Activated B cell treated with CpG ODN at 0.5 μM for 24 hours (primary cell): ENCODE measurements at regions of chr2 and their contacts with region 1.

Region 1: GRCh38 chr2:437762-438393 is 150.0 kb upstream of the ALKAL2 start:
- DNase-seq: no peak
- ATAC-seq: peak; percentile 95
- H3K4me3 Mint-ChIP-seq: peak overlapping the region; percentile 81
- H3K27ac Mint-ChIP-seq: peak overlapping the region; percentile 87
- H3K4me1 Mint-ChIP-seq: peaks cover 56% of the 10 kb centered on the region
- H3K27me3 Mint-ChIP-seq: no peaks in the 10 kb centered on the region
- CTCF ChIP-seq: no peak

Region 2: DNA sequence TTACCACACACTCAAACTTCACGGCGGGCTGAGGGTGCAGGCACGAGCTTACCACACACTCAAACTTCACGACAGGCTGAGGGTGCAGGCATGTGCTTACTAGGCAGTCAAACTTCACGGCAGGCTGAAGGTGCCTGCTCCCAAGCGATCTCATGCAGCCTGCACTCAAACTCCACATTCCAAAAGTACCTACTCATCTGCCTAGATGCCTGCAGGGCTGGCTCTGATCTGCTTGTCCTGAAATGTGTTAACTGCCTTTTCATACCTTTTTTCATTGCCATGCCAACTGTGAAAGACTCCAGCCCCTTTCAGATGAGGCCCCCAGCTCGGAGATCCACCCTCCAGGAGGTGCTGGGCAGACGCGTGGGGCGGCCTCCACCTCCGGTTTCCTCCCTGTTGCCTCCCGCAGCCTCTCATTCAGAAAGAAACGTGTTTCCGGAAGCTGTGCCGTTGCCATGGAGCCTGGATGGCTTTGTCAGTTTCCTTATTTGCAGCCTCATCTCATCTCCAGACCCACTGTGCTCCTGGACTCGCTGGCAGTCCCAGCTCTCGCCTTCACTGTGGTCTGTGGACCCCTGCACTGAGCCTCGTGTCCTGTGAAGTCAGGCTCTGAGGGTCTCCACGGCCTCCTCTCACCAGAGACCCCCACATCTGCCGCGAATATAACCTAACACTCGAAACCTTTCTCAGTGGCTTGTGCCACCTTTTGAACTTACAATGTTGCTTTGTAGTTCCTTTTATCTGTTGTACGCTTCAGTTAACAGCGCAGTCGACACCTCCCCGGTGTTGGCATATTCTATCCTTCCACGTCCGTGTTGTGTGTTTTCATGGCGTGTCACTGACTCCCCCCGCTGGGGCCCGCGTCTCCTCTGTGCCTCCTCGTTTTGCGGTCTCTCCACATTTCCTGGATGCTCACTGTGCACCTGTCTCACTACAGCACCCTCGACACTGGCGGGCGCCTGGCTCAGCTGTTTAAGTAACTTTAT is 43.9 kb before region 1 on chr2:
- CTCF ChIA-PET with region 1: no interaction called
- POLR2A ChIA-PET with region 1: no interaction called
- intact Hi-C with region 1: no loop called
- DNase-seq: no peak
- ATAC-seq: peak; percentile 80
- H3K4me3 Mint-ChIP-seq: peak overlapping the region; percentile 70
- H3K27ac Mint-ChIP-seq: peak overlapping the region; percentile 84
- H3K4me1 Mint-ChIP-seq: peaks cover 9% of the 10 kb centered on the region
- H3K27me3 Mint-ChIP-seq: no peaks in the 10 kb centered on the region
- CTCF ChIP-seq: no peak

Region 3: DNA sequence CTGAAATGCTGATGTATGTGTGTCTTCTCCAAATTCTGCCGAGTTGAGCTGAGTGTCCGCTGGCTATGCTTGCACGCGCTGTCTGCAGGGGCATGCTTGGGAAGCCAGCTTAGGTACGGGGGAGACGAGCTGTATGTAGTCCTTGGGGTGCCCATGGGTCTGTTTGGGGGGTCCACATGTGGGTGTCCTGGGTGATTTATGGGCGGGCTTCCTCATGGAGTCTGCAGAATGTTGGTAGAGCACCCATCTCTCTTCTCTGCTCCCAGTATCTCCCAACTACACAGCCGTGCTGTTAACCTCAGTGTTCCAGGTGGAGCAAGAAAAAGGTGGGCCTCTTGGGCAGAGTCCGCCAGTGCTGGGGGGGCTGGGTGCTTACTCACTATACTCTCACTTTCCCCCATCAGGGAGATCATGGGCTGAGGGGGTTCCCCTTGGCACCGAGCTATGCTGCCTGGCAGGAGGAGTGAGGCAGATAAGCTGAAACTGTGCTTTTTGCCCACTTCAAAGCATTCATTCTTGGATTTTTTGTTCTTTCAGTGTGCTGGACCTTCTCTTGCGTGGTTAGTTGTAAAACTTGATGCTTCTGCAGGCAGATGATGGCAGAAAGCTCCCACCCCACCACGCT is 21.8 kb before region 1 on chr2:
- CTCF ChIA-PET with region 1: no interaction called
- POLR2A ChIA-PET with region 1: no interaction called
- intact Hi-C with region 1: no loop called
- DNase-seq: no peak
- ATAC-seq: no peak
- H3K4me3 Mint-ChIP-seq: no peak overlapping the region
- H3K27ac Mint-ChIP-seq: no peak overlapping the region
- H3K4me1 Mint-ChIP-seq: no peaks in the 10 kb centered on the region
- H3K27me3 Mint-ChIP-seq: peaks cover 6% of the 10 kb centered on the region
- CTCF ChIP-seq: no peak

Region 4: DNA sequence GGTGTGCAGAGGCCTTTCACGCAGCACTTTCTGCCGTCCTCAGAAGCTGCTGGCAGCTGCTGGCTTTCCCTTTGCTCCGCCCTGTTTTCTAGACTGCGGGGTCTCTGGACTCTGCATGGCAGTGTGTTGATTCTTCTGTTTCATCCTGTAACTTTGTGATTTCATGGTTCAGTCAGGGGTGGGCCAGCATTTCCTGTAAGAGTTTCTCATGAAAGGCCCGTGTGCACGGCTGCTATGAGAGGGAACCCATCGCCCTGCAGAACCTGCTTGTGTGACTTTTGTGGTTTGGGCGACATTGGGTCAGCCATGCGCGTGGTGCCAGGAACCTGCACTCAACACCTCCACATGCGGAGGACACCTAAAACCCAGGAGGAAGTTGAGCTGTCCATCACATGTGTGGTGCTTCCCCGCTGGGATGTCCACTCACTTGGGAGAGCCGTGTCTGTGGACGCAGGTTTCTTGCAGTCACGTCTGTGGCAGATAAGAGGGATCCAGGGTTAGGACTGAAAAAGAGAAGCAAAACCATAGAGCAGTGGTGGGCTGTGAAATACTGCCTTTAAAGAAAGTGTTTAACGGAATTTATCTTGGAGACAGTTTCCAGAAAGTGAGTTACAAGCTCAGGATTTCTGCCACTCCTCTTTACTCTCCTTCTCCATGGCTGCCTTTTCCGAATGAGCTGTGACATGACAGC is 17.3 kb after region 1 on chr2:
- CTCF ChIA-PET with region 1: no interaction called
- POLR2A ChIA-PET with region 1: interaction called, 5 read pairs
- intact Hi-C with region 1: loop called (anchors 2 kb)
- DNase-seq: no peak
- ATAC-seq: peak; percentile 73
- H3K4me3 Mint-ChIP-seq: peak overlapping the region; percentile 38
- H3K27ac Mint-ChIP-seq: peak overlapping the region; percentile 67
- H3K4me1 Mint-ChIP-seq: peaks cover 67% of the 10 kb centered on the region
- H3K27me3 Mint-ChIP-seq: no peaks in the 10 kb centered on the region
- CTCF ChIP-seq: no peak